Activated CD4-positive, alpha-beta T cell treated with anti-CD3 and anti-CD28 coated beads, Interleukin-2, amount 10 ng/mL, durations not matched to agents 24 days and 14 days (primary cell): ENCODE measurements at regions of chr1 and their contacts with region 1.

Region 1: GRCh38 chr1:203287109-203287893 is 18.0 kb upstream of the BTG2 start:
- DNase-seq: peak; percentile 95
- H3K4me3 Mint-ChIP-seq: peak overlapping the region; percentile 82
- H3K27ac Mint-ChIP-seq: peak overlapping the region; percentile 97
- H3K4me1 Mint-ChIP-seq: peaks cover 69% of the 10 kb centered on the region
- H3K27me3 Mint-ChIP-seq: peaks cover 2% of the 10 kb centered on the region

Region 2: DNA sequence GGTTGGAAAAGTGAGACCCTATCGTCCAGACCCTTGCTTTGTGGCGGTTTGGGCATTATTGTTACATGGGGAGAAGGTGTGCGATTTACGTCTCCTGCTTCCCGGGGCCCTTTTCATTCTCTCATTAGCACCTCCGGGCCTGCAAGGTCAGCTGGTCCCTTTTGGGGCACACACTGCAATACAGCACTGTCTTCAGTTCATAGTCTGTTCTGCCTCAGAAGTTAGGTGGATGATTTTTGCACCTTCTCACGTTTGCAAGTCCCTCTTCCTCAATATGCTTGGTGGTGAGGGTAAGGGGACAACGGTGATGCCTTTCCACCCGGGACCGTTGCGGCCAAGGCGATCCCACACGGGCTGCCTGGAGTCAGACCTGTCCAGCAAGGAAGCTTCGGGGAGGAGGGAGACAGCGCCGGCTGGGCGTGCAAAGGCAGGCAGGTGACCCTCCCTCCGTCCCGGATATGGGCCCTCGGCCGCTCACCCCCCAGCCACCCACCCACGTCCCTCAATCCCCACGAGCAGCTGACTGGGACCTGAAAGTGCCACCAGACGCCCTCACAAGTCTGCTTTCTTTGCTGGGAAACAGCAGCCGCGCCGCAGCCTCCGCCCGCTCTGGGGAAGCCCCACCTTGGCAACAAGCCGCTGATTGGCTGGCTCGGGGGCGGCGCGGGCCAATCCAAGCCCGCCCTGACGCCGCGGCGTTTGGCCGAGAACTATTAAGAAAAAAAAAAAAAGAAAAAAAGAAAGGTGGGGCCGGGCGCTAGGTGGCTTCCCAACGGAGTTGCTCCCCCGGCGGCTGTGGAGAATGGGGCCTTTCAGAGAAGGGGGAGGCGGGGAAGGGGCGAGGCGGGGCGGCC is 39.8 kb after region 1 on chr1:
- intact Hi-C with region 1: loop called (anchors 1 kb)
- DNase-seq: peak; percentile 98
- H3K4me3 Mint-ChIP-seq: peak overlapping the region; percentile 83
- H3K27ac Mint-ChIP-seq: peak overlapping the region; percentile 94
- H3K4me1 Mint-ChIP-seq: peaks cover 61% of the 10 kb centered on the region
- H3K27me3 Mint-ChIP-seq: no peaks in the 10 kb centered on the region